GM18951 (cell line): ENCODE measurements at regions of chr6 and their contacts with region 1.

Region 1: GRCh38 chr6:119129148-119129967 is 50.9 kb upstream of the FAM184A start:
- POLR2A ChIP-seq: no peak

Region 2: GRCh38 chr6:119742188-119742803 is 612.9 kb after region 1 on chr6:
- in situ Hi-C with region 1: loop called (anchors 25 kb)
- POLR2A ChIP-seq: no peak